Heart right ventricle (tissue), 16 donors: ENCODE measurements at regions of chr5 and their contacts with region 1.

Region 1: DNA sequence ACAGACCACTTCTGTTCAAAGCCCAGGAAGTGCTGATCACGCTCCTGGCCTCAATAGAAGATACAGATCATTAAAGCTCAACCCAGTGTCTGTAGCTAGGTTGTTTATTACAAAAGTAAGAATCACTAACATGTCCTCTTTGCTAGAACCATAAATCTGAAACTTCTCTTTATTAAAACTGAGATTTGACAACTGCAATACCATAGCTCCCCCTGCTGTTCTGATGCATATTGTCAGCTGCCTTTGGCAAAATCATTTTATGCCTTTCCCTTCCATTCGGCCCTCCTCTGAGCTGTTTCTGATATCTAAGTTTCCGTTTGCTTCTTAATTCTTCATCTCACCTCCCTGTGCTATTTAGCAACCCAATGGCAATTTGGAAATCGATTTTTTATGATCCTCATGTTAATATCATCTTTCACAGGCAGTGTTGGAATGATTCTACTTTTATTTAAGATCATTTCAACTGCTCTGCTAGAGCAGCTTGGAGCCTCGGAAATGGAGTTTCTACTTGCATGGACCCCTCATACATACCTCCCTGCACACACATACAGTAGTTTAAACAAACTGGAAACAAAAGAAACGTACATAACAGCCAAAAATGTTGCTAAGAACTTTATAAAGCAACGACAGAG is 998.8 kb downstream of the MAT2B start:
- DNase-seq: peak in 1 of 2 donors; percentile 34
- ATAC-seq: no peak
- H3K4me3 ChIP-seq: no peak overlapping the region
- H3K27ac ChIP-seq: no peak overlapping the region
- H3K4me1 ChIP-seq: no peaks in the 10 kb centered on the region
- H3K27me3 ChIP-seq: peaks cover 0 to 13% (median 0%) of the 10 kb centered on the region in 7 donors
- CTCF ChIP-seq: peak; percentile 46 to 78 (median 74)

Region 2: DNA sequence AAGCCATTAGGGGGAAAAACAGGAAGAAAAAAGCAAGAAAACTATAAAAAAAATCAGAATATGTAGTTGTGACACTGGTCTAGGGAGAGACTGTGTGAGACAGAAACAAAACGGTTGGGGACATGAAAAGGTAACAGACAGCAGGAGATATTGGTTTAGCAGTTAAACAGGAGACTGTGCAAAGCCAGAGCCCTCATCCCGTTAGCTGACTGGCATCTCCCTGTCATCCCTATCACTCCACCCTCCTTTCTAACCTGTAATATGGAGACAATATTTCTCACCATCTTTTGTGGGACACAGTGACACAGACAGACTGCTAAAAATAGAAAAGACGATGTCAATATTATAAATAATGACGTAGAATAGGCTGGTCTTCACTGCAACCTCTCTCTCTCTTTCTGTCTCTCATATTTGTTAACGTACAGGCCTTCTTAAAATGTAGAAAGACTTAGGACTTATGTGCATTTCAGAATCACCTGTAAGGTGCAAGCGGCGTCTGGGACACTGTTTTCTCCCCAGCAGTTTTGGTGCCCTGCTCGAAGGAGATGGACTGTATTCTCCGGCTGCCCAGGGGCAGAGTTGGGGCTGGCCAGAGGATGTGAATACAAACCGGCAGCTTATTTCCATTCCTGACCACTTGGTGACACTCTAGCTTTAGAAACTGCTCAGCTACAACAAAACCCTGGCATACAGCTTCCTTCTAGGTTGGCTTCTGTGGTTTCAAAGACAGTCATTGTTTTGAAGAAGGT is 808.3 kb before region 1 on chr5:
- intact Hi-C with region 1: loop called in 5 of 10 experiments (anchors 5 to 10 kb)
- DNase-seq: peak in 1 of 2 donors; percentile 5
- ATAC-seq: peak in 6 of 8 donors; percentile 49 to 68 (median 55)
- H3K4me3 ChIP-seq: no peak overlapping the region
- H3K27ac ChIP-seq: no peak overlapping the region
- H3K4me1 ChIP-seq: no peaks in the 10 kb centered on the region
- H3K27me3 ChIP-seq: no peaks in the 10 kb centered on the region
- CTCF ChIP-seq: peak in 7 of 9 donors; percentile 34 to 61 (median 48)

Region 3: GRCh38 chr5:164475339-164475977 is 28.8 kb before region 1 on chr5:
- intact Hi-C with region 1: no loop called
- DNase-seq: no peak
- ATAC-seq: no peak
- H3K4me3 ChIP-seq: no peak overlapping the region
- H3K27ac ChIP-seq: no peak overlapping the region
- H3K4me1 ChIP-seq: no peaks in the 10 kb centered on the region
- H3K27me3 ChIP-seq: no peaks in the 10 kb centered on the region
- CTCF ChIP-seq: peak; percentile 16 to 60 (median 46)